ENCODE measurements at regions of chr22 and their contacts with region 1.

Region 1: GRCh38 chr22:28829358-28830181 is 29.2 kb upstream of the XBP1 start:
- DNase-seq: peak; percentile 86
- ATAC-seq: peak; percentile 80
- H3K4me3 Mint-ChIP-seq: no peak overlapping the region
- H3K27ac Mint-ChIP-seq: peak overlapping the region; percentile 55
- H3K4me1 Mint-ChIP-seq: peaks cover 48% of the 10 kb centered on the region
- H3K27me3 Mint-ChIP-seq: no peaks in the 10 kb centered on the region

Region 2: GRCh38 chr22:28600546-28601143 is 228.9 kb before region 1 on chr22:
- CTCF ChIA-PET with region 1: interaction called, 55 read pairs
- POLR2A ChIA-PET with region 1: no interaction called
- DNase-seq: peak; percentile 42
- ATAC-seq: peak; percentile 49
- H3K4me3 Mint-ChIP-seq: no peak overlapping the region
- H3K27ac Mint-ChIP-seq: no peak overlapping the region
- H3K4me1 Mint-ChIP-seq: no peaks in the 10 kb centered on the region
- H3K27me3 Mint-ChIP-seq: peaks cover 31% of the 10 kb centered on the region

Region 3: GRCh38 chr22:28734393-28734792 is 95.2 kb before region 1 on chr22:
- CTCF ChIA-PET with region 1: no interaction called
- POLR2A ChIA-PET with region 1: no interaction called
- DNase-seq: no peak
- ATAC-seq: no peak
- H3K4me3 Mint-ChIP-seq: no peak overlapping the region
- H3K27ac Mint-ChIP-seq: no peak overlapping the region
- H3K4me1 Mint-ChIP-seq: peaks cover 14% of the 10 kb centered on the region
- H3K27me3 Mint-ChIP-seq: no peaks in the 10 kb centered on the region

Region 4: GRCh38 chr22:28791841-28792490 is 37.6 kb before region 1 on chr22:
- CTCF ChIA-PET with region 1: interaction called, 63 read pairs
- POLR2A ChIA-PET with region 1: interaction called, 5 read pairs
- DNase-seq: no peak
- ATAC-seq: peak; percentile 54
- H3K4me3 Mint-ChIP-seq: peak overlapping the region; percentile 26
- H3K27ac Mint-ChIP-seq: peak overlapping the region; percentile 84
- H3K4me1 Mint-ChIP-seq: peaks cover 64% of the 10 kb centered on the region
- H3K27me3 Mint-ChIP-seq: no peaks in the 10 kb centered on the region

Region 5: GRCh38 chr22:28810821-28811491 is 18.6 kb before region 1 on chr22:
- CTCF ChIA-PET with region 1: interaction called, 52 read pairs
- POLR2A ChIA-PET with region 1: interaction called, 14 read pairs
- DNase-seq: peak; percentile 75
- ATAC-seq: peak; percentile 52
- H3K4me3 Mint-ChIP-seq: peak overlapping the region; percentile 74
- H3K27ac Mint-ChIP-seq: peak overlapping the region; percentile 96
- H3K4me1 Mint-ChIP-seq: peaks cover 82% of the 10 kb centered on the region
- H3K27me3 Mint-ChIP-seq: no peaks in the 10 kb centered on the region

Region 6: DNA sequence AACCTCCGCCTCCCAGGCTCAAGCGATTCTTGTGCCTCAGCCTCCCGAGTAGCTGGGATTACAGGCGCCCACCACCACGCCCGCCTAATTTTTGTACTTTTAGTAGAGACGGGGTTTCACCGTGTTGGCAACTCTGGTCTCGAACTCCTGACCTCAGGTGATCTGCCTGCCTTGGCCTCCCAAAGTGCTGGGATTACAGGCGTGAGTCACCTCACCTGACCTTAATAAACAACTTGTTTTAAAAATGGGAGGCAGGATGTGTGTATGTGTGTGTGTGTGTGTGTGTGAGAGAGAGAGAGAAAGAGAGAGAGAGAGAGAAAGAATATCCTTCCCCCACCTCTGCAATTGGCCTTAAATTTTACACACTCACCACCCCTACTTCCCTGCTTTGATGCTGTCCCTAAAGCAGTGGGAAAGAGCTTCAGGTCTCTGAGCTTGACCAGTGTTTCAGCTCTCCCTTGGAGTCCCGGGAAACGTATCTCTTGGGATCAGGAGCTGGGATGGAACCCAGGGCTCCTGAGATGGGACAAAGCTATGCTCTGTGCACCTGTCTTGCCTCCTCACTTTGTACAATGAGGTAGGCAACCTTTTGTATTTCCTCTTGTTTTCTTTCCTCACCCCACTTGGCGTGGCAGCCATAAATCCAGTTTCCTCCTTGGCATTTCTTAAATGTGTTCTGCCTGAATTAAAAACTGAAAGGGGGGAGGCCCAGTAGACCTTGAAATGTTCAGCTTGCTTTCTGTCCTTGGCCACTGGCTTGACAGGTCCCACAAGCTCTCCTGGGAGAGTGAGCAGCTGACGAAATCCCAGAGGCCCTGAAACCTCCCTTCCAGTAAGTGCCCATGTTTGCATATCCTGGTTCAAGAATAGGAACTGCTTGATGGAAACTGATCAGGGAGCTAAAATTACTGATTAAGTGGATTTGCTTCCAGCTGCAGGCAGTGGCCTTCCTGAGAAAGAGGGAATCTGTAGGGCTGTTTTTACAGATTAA is 11.4 kb before region 1 on chr22:
- CTCF ChIA-PET with region 1: interaction called, 52 read pairs
- POLR2A ChIA-PET with region 1: no interaction called
- DNase-seq: peak; percentile 39
- ATAC-seq: no peak
- H3K4me3 Mint-ChIP-seq: no peak overlapping the region
- H3K27ac Mint-ChIP-seq: peak overlapping the region; percentile 81
- H3K4me1 Mint-ChIP-seq: peaks cover 82% of the 10 kb centered on the region
- H3K27me3 Mint-ChIP-seq: no peaks in the 10 kb centered on the region

Region 7: DNA sequence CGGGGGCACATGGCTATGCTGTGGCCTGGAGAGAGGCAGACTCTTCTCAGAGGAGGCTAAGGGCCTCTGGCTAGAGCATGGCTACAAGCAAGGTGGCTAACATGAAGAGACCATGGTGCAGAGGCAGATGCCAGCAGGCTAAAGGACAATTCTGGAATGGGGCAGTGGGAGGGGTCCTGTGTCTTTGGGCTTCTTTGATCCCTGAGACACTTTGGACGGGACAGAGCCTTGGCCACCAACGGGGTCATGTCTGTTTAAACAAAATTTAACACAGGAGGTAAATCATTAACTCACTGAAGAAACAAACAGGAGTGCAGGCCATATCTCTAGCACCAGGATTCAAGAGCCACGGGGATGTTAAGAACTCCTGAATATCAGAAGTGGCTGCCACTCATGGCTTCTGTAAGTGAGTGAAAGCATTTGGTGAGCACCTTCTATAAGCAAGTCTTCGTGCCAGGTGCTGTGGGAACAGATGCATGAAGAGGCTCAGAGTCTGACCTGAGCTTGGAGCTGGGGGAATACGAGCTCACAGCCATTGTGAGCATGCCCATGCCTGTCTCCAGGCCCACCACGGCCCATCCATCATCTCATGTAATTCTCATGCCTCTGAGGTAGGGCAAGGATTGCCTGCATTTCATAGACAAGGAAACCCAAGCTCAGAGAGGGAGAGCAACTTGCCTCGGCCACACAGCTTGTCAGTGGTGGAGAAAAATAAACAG is 35.5 kb after region 1 on chr22:
- CTCF ChIA-PET with region 1: no interaction called
- POLR2A ChIA-PET with region 1: no interaction called
- DNase-seq: no peak
- ATAC-seq: no peak
- H3K4me3 Mint-ChIP-seq: no peak overlapping the region
- H3K27ac Mint-ChIP-seq: no peak overlapping the region
- H3K4me1 Mint-ChIP-seq: no peaks in the 10 kb centered on the region
- H3K27me3 Mint-ChIP-seq: peaks cover 6% of the 10 kb centered on the region

Region 8: DNA sequence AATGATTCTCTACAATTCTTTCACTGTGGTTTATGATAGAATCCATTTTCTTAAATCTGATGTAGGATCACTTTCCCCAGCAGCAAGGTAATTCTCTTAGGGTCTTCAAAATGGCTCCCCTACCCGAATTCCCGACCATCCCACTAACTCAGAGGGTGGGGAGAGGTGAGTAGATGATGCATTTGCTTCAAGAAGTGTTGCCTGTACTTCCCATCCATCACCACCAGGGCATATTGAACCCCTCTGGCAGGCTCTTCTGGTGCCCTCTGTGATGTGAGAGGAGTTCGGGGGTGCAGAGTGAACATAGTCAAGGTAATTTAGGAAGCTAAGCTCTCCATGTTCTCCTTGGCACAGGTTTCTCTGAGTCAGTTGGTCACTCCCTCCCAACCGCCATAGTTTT is 106.1 kb after region 1 on chr22:
- CTCF ChIA-PET with region 1: no interaction called
- POLR2A ChIA-PET with region 1: no interaction called
- DNase-seq: no peak
- ATAC-seq: no peak
- H3K4me3 Mint-ChIP-seq: no peak overlapping the region
- H3K27ac Mint-ChIP-seq: no peak overlapping the region
- H3K4me1 Mint-ChIP-seq: no peaks in the 10 kb centered on the region
- H3K27me3 Mint-ChIP-seq: peaks cover 72% of the 10 kb centered on the region

Region 9: GRCh38 chr22:28950617-28951411 is 121.2 kb after region 1 on chr22:
- CTCF ChIA-PET with region 1: no interaction called
- POLR2A ChIA-PET with region 1: no interaction called
- DNase-seq: no peak
- ATAC-seq: no peak
- H3K4me3 Mint-ChIP-seq: no peak overlapping the region
- H3K27ac Mint-ChIP-seq: no peak overlapping the region
- H3K4me1 Mint-ChIP-seq: peaks cover 9% of the 10 kb centered on the region
- H3K27me3 Mint-ChIP-seq: peaks cover 69% of the 10 kb centered on the region